ENCODE measurements at regions of chr19 and their contacts with region 1.

Region 1: DNA sequence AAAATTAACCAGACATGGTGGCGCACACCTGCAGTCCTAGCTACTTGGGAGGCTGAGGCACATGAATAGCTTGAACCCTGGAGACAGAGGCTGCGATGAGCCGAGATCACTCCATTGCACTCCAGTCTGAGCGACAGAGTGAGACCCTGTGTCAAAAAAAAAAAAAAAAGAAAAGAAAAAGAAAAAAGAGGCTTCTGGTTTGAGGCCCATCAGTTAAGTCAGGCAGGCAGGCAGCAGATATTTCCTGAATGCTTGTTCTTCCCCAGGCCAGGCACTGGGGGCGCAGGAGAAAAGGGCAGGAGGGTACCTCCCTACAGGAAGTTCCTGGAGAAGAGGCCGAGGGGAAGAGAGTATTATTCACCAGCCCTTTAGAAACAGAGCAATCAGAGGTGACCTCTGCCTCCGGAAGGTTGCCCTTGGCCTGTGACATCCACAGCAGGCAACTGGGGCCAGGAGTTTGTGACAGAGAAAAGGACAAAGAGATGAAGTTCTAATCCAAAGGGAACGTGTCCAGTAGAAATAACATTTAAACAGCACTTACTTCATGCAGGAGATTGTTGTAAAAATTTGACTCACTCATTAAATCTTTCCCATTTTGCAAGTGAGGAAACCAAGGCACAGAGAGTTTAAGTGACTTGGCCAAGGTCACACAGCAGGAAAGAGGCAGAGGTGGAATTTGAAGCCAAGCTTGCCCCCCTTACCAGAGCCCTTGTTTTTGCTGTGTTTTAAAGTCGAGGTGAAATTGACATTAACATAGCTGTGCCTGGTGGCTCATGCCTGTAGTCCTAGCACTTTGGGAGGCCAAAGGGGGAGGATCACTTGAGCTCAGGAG is 4.3 kb upstream of the RLN3 start:
- DNase-seq: no peak
- ATAC-seq: peak; percentile 86
- H3K4me3 ChIP-seq: no peak overlapping the region
- H3K27ac ChIP-seq: peak overlapping the region; percentile 49; the same call in 1 of the 2 replicates
- H3K4me1 ChIP-seq: peaks cover 3% of the 10 kb centered on the region; the same call in 1 of the 2 replicates
- H3K27me3 ChIP-seq: no peaks in the 10 kb centered on the region
- CTCF ChIP-seq: peak; percentile 74

Region 2: GRCh38 chr19:13961826-13962698 is 61.6 kb before region 1 on chr19:
- CTCF ChIA-PET with region 1: interaction called, 16 read pairs
- POLR2A ChIA-PET with region 1: no interaction called
- in situ Hi-C with region 1: no loop called
- intact Hi-C with region 1: no loop called
- DNase-seq: no peak
- ATAC-seq: peak; percentile 54
- H3K4me3 ChIP-seq: no peak overlapping the region
- H3K27ac ChIP-seq: no peak overlapping the region
- H3K4me1 ChIP-seq: no peaks in the 10 kb centered on the region
- H3K27me3 ChIP-seq: no peaks in the 10 kb centered on the region
- CTCF ChIP-seq: no peak

Measured in Panc1 (cell line).